ENCODE measurements at regions of chr3 and their contacts with region 1.

Region 1: GRCh38 chr3:15268033-15268631 is 62.1 kb downstream of the CAPN7 start:
- DNase-seq: peak; percentile 92 to 95
- ATAC-seq: peak; percentile 88
- H3K4me3 ChIP-seq: no peak overlapping the region
- H3K27ac ChIP-seq: no peak overlapping the region
- H3K4me1 ChIP-seq: no peaks in the 10 kb centered on the region
- H3K27me3 ChIP-seq: no peaks in the 10 kb centered on the region

Region 2: DNA sequence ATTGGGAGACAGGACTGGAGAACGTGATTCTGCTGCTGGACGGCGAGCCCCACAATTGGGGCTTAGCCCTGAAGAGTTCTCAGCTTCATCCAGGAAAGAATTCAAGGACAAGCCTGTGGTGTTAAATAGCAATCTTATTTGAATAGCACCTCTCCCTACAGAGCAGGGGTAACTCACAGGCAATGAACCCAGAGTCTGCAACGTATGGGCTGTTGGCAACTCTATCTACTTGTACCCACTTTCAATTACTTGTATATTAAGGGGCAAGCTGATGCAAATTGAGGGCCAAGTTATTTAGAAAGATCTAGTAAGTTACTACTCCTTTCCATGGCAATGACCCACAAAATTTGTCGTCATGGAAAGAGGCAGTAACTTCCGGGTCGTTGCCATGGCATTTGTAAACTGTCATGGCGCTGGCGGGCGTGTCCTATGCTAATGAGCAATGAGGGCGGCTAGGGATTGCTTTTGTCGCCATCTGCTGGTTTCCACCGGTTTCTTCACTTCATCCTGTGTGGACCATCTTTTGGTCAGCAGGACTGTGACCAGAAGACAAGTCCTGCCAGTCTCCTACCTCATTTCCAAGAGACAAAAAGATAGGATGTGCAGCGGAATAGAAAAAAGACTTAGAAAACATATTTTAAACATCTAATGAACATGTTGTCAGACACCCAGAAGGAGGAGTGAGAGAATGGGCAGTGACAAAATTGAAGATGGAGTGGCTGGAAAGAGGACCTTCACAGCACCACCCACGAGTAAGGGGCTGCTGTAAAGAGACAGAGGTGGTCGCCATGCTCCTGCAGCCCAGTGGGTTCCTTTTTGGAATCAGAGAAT is 110.0 kb after region 1 on chr3:
- intact Hi-C with region 1: loop called (anchors 1 kb)
- DNase-seq: peak; percentile 97
- ATAC-seq: peak; percentile 98
- H3K4me3 ChIP-seq: no peak overlapping the region
- H3K27ac ChIP-seq: peak overlapping the region in 1 of 2 donors; percentile 70
- H3K4me1 ChIP-seq: no peaks in the 10 kb centered on the region
- H3K27me3 ChIP-seq: no peaks in the 10 kb centered on the region